Head of caudate nucleus (tissue), 42 donors: ENCODE measurements at regions of chr18 and their contacts with region 1.

Region 1: GRCh38 chr18:57561728-57562423 is 24.6 kb downstream of the FECH start:
- DNase-seq: peak in 14 of 42 donors; percentile 21 to 71 (median 48)

Region 2: GRCh38 chr18:56748698-56749268 is 813.1 kb before region 1 on chr18:
- intact Hi-C with region 1: loop called (anchors 10 kb)
- DNase-seq: peak in 8 of 42 donors; percentile 9 to 53 (median 30)

Region 3: GRCh38 chr18:57353940-57354461 is 207.9 kb before region 1 on chr18:
- intact Hi-C with region 1: no loop called
- DNase-seq: peak in 35 of 42 donors; percentile 8 to 66 (median 33)

Region 4: GRCh38 chr18:57630002-57630753 is 68.3 kb after region 1 on chr18:
- intact Hi-C with region 1: no loop called
- DNase-seq: peak; percentile 93 to 99 (median 97)